ENCODE measurements at regions of chr2 and their contacts with region 1.

Region 1: GRCh38 chr2:176554101-176555048 is 285.1 kb downstream of the MTX2 start:
- DNase-seq: no peak
- ATAC-seq: peak; percentile 62

Region 2: DNA sequence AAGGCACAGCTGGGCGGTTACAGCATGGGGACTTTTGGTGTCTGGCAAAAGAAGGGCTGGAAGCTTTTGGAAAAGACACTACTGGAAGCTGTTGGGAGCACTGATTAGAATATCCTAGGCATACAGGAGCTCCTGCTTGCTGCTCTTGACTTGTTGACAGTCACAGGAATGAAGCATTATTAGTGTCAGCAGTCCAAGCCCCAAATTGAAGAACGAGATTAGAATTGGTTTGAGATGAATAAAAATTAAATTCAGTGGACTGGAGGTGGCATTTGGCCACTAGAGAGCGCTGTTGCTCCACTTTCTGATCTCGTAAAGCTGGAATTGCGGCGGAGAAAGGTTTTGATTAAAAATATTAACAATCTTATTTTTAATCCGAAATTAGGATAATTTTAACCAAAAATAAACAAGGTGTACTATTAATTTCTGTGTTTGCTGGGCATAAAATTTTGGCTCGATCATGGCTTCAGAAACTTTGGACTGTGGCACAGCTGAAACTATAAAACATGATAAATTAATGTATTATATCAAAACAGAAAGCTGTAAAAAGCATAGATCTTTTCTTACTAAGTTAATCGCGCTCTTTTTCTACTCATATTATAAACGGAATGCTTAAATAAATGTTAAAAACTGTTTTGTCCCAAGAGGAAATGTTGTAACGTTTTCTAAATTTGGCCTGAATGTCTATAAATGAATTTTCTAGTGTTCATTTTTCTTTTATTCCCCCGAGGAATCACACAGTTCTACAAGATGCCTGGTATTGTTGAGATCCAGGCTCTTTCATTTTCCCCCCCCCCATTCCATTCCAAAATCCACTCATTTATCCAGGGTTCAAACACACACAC is 427.2 kb before region 1 on chr2:
- intact Hi-C with region 1: loop called (anchors 5 kb)
- DNase-seq: no peak
- ATAC-seq: no peak

Region 3: DNA sequence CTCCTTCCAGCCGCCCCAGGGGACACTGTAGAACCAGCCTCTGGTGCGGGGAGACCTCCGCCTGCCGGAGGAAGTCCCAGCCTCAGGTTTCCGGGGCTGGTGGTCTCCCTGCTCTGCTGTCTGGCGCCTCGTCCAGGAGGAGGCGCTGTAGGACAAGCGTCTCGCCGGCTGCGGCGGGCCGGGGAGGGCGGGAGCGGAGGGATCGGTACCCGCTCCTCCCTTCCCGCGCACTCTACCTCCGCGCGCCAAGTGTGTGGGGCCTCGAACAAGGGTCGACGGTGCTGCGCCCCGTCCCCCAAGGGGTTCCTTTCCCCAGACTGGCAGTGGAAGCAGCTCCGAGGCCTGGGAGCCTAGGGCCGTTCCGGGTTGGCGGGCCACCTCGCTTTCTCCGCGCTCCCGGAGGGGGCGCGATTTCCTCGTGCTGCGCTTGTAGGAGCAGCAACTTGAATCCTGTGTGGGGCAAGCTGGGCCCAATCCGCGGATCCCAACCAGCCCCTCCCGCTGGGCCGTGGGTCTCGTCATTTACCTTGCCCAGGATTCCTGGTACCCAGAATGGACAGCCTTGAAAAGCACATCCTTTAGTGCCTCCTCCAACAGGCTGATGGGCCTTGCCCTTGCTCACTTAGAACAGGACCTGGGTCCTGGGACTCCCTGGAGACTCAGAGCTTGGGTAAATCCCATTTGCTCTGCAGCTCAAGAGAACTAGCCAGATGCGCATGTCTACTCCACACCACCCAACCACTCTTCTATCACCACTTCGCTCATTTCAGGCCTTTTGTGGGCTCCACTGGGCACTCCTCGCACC is 413.7 kb before region 1 on chr2:
- intact Hi-C with region 1: loop called (anchors 1 kb)
- DNase-seq: no peak
- ATAC-seq: peak; percentile 83

Region 4: DNA sequence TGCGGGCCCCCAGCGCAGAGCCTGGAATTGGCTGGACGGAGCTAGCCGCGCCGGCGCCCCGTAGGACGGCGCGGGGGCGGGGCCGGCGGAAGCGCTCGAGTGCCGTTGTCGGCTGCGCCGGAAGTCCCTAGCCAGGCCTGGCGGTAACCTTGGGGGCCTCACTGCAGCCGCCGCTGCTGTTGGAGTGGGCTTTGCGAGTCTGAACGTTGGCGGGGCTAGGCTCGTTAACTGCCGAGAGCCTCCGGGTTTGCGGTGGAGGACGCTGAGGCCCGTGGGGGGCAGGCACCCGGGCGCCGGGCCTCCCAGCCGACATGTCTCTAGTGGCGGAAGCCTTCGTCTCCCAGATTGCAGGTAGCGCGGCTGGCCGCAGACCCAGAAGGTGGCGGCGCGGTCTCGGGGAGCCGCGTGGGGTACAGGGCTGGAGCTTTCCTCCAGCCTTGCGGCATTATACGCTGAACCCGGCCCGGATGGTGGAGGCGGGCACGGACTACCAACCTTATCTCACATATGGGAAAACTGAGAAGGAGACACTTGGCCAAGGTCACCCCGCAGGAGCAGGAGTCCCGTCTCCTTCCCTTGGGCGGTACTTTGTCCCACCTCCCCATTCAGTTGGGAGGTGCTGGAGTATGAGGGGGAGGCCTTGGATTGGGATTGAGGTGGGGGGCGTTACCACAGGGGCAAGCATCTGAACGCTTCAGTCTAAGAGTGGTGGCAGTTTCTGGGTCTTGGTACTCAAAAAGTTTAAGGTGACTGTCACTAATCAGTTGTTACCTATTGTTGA is 284.9 kb before region 1 on chr2 and contains the start of gene MTX2:
- intact Hi-C with region 1: loop called (anchors 5 kb)
- DNase-seq: peak; percentile 89
- ATAC-seq: peak; percentile 99
- total RNA-seq, gene MTX2: 51.0 TPM

Region 5: DNA sequence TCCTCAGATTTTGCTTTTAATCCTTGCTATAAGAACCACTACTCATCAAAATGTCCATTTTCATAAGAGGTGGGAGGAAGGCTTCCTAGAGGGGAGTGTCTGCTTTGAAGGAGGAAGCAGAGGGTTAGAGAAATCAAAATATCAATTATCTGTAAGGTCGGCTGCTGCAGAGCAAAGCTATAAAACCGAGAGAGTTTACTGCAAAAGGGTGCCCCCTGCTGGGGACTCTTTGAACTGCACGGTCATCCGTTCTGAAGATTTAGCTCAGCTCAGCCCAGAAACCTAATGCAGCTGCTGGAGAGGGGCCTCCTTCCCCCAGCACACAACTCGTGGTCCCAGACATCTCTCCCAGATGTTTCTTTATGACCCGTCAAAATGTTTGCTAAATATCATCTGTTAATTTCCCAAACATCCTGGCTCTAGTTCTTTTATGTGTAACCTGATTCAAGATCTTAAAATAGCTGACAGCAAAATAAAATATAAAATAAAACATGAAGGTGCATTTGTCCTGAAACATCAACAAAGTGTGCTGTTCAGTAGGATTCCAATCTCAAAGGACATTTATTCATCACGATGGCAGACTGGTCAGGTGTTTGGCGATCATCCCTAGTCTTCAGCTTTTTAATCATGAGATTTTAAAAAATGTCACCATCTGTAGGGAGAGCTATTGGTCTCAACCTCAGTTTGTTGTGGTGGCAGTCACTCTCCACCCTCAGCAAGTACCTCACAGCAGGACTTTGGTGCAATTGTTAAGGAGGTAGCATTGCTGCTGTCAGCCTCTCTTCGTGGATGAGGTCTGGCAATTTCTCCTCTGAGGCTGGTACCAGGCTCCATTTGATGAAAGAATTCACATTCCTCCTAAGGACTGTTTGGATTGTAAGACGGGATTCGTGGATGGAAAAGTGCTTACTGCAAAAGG is 99.2 kb before region 1 on chr2:
- intact Hi-C with region 1: loop called (anchors 5 kb)
- DNase-seq: peak; percentile 69
- ATAC-seq: peak; percentile 47

Region 6: GRCh38 chr2:176491172-176491904 is 63.0 kb before region 1 on chr2:
- intact Hi-C with region 1: loop called (anchors 5 kb)
- DNase-seq: peak; percentile 88
- ATAC-seq: peak; percentile 88

Region 7: DNA sequence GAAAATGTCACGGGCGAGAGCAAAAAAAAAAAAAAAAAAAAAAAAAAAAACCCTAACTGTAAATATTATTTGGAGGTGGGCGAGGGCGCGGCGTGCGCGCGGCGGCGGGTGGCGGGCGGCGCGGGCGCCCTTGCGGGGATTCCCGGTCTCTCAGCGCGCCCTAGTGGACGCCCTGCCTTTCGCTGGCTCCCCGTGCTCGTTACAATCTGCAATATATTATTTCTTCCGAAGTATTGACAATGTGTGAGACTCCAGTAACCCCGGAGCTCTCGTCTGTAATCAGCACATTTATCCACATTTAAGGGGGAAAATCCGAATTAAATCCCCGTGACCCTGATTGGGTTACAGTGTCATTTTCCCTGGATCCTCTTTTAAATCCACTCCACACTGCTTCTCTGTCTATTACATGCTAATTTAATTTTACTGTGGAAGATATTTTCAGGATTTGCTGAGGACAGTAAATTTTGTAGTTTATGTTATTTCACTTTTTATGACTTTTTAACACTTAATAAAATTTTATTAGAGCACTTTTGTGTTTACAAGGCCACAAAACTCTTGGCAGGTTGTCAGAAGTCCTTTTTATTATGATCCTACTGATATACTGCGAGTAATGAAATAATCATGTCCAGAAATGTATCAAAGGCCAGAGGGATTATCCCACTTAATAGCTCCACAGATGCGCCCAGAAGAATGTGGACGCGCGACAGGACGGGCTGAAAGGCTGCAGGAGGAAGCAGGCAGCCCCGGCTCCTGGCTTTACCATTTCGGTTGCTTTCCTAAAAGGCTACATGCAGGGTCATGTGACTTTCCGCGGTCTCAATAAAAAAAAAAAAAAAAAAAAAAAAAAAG is 84.0 kb after region 1 on chr2:
- intact Hi-C with region 1: loop called (anchors 2 kb)
- DNase-seq: peak; percentile 76
- ATAC-seq: peak; percentile 91